Caco-2 (cell line): ENCODE measurements at regions of chr4 and their contacts with region 1.

Region 1: GRCh38 chr4:95085124-95085833 is 327.5 kb downstream of the BMPR1B start:
- DNase-seq: peak; percentile 36 to 47
- H3K4me3 ChIP-seq: no peak overlapping the region
- H3K4me3 Mint-ChIP-seq: peak overlapping the region; percentile 48
- H3K27ac Mint-ChIP-seq: peak overlapping the region; percentile 82
- H3K4me1 ChIP-seq: peaks cover 48% of the 10 kb centered on the region
- H3K4me1 Mint-ChIP-seq: peaks cover 28% of the 10 kb centered on the region
- H3K27me3 ChIP-seq: no peaks in the 10 kb centered on the region
- H3K27me3 Mint-ChIP-seq: no peaks in the 10 kb centered on the region
- CTCF ChIP-seq: no peak

Region 2: DNA sequence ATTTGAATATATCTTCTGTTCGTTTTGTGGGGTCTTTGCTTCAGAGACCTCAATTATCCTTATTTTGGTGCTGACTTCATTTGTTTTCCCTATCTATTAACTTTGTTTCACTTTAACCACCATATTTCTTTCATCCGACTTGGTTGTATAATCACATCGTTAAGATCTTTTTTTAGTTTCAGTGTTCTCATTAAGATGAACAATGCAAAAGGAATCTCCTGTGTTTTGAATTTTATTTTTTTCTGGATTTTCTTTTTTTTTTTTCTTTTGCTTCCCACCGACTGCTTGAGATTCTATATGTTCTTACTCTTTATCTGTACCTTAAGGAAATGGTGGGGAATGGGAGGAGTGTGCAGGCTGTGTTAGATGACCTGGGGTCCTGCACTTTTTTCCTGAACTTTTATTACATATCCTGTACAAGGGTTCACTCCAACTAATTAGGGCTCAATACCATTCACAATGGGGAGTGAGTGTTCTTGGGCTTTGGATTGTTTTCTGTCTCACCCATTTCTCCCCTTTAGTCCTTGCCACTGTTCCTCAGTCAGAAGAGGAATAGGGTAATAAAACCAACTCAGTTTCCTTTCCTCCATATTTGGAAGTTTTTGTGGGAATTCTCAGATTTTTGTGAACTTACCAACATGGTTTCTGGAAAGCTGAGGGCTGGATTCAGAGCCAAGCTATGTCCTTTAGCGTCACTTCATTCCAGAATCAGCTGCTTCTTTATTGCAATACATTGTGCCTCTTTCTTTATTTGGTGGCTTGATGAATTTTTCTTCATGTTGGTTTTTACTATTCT is 370.7 kb before region 1 on chr4:
- CTCF ChIA-PET with region 1: no interaction called
- POLR2A ChIA-PET with region 1: no interaction called
- intact Hi-C with region 1: no loop called
- DNase-seq: no peak
- H3K4me3 ChIP-seq: no peak overlapping the region
- H3K4me3 Mint-ChIP-seq: no peak overlapping the region
- H3K27ac Mint-ChIP-seq: no peak overlapping the region
- H3K4me1 ChIP-seq: no peaks in the 10 kb centered on the region
- H3K4me1 Mint-ChIP-seq: no peaks in the 10 kb centered on the region
- H3K27me3 ChIP-seq: no peaks in the 10 kb centered on the region
- H3K27me3 Mint-ChIP-seq: peaks cover 4% of the 10 kb centered on the region
- CTCF ChIP-seq: no peak

Region 3: GRCh38 chr4:94954251-94954650 is 131.0 kb before region 1 on chr4:
- CTCF ChIA-PET with region 1: interaction called, 7 read pairs
- POLR2A ChIA-PET with region 1: no interaction called
- intact Hi-C with region 1: loop called (anchors 2 kb)
- DNase-seq: no peak
- H3K4me3 ChIP-seq: no peak overlapping the region
- H3K4me3 Mint-ChIP-seq: no peak overlapping the region
- H3K27ac Mint-ChIP-seq: peak overlapping the region; percentile 14
- H3K4me1 ChIP-seq: no peaks in the 10 kb centered on the region; the same call in 1 of the 2 replicates
- H3K4me1 Mint-ChIP-seq: peaks cover 15% of the 10 kb centered on the region
- H3K27me3 ChIP-seq: no peaks in the 10 kb centered on the region
- H3K27me3 Mint-ChIP-seq: no peaks in the 10 kb centered on the region
- CTCF ChIP-seq: no peak

Region 4: GRCh38 chr4:95013236-95013635 is 72.0 kb before region 1 on chr4:
- CTCF ChIA-PET with region 1: no interaction called
- POLR2A ChIA-PET with region 1: no interaction called
- intact Hi-C with region 1: loop called (anchors 2 kb)
- DNase-seq: no peak
- H3K4me3 ChIP-seq: no peak overlapping the region
- H3K4me3 Mint-ChIP-seq: no peak overlapping the region
- H3K27ac Mint-ChIP-seq: no peak overlapping the region
- H3K4me1 ChIP-seq: peaks cover 10% of the 10 kb centered on the region
- H3K4me1 Mint-ChIP-seq: peaks cover 12% of the 10 kb centered on the region
- H3K27me3 ChIP-seq: no peaks in the 10 kb centered on the region
- H3K27me3 Mint-ChIP-seq: no peaks in the 10 kb centered on the region
- CTCF ChIP-seq: no peak

Region 5: GRCh38 chr4:95044324-95044837 is 40.9 kb before region 1 on chr4:
- CTCF ChIA-PET with region 1: no interaction called
- POLR2A ChIA-PET with region 1: no interaction called
- intact Hi-C with region 1: loop called (anchors 2 kb)
- DNase-seq: no peak
- H3K4me3 ChIP-seq: no peak overlapping the region
- H3K4me3 Mint-ChIP-seq: no peak overlapping the region
- H3K27ac Mint-ChIP-seq: no peak overlapping the region
- H3K4me1 ChIP-seq: peaks cover 8% of the 10 kb centered on the region
- H3K4me1 Mint-ChIP-seq: peaks cover 2% of the 10 kb centered on the region
- H3K27me3 ChIP-seq: no peaks in the 10 kb centered on the region
- H3K27me3 Mint-ChIP-seq: no peaks in the 10 kb centered on the region
- CTCF ChIP-seq: no peak

Region 6: DNA sequence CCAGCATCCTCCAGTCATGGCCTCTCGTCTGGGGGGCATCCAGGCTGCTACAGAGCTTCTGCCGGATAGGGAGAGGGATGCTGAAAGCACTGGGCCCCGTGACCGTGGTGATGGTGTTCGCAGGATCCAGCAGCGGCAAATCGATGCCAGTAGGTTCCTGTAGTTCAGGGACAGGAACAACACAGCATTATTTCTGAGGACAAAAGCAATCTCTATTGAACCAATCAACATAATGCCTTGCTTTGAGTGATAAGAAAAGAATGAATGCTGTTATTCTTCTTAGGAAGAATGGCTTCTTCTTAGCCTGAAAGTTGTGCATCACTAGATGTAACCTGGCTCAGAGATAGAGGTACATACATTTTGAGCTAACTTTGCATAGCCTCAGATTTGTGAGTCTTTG is 84.9 kb after region 1 on chr4:
- CTCF ChIA-PET with region 1: no interaction called
- POLR2A ChIA-PET with region 1: no interaction called
- intact Hi-C with region 1: no loop called
- DNase-seq: no peak
- H3K4me3 ChIP-seq: no peak overlapping the region
- H3K4me3 Mint-ChIP-seq: no peak overlapping the region
- H3K27ac Mint-ChIP-seq: no peak overlapping the region
- H3K4me1 ChIP-seq: no peaks in the 10 kb centered on the region
- H3K4me1 Mint-ChIP-seq: no peaks in the 10 kb centered on the region
- H3K27me3 ChIP-seq: no peaks in the 10 kb centered on the region
- H3K27me3 Mint-ChIP-seq: no peaks in the 10 kb centered on the region
- CTCF ChIP-seq: no peak

Region 7: GRCh38 chr4:95450294-95450693 is 365.0 kb after region 1 on chr4:
- CTCF ChIA-PET with region 1: no interaction called
- POLR2A ChIA-PET with region 1: no interaction called
- intact Hi-C with region 1: no loop called
- DNase-seq: no peak
- H3K4me3 ChIP-seq: no peak overlapping the region
- H3K4me3 Mint-ChIP-seq: no peak overlapping the region
- H3K27ac Mint-ChIP-seq: no peak overlapping the region
- H3K4me1 ChIP-seq: 0 out of 2 replicates have a peak, but pooled peaks cover 13% of the 10 kb centered on the region
- H3K4me1 Mint-ChIP-seq: peaks cover 14% of the 10 kb centered on the region
- H3K27me3 ChIP-seq: no peaks in the 10 kb centered on the region
- H3K27me3 Mint-ChIP-seq: no peaks in the 10 kb centered on the region
- CTCF ChIP-seq: no peak